ENCODE measurements at regions of chr15 and their contacts with region 1.

Region 1: DNA sequence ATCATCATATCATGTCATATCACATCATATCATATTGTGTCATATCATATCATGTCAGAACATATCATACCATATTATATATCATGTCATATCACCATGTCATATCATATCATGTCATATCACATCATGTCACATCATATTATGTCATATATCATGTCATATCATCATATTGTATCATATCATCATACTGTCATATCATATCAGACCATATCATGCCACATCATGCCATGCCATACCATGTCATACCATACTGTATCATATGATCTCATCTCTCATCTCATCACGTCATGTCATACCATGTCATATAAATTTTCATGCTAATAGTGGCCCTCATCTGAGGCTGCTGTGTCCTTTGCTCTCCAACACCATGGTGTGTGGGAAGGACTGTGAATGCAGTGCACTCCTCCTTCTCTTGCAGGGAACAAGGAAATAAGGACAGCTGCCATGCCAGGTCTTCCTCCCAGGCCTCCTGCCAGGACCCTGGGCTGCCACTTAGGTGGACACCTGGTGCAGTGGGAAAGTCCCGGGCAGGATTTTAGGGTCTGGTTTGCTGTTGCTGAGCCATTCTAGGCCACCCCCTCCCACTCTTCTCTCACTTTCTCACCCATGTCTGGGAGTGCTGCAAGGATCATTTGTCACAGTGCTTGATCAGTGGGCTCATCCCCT is 72.4 kb upstream of the TRPM1 start:
- DNase-seq: no peak
- ATAC-seq: no peak

Region 2: GRCh38 chr15:31150721-31151231 is 23.1 kb before region 1 on chr15:
- intact Hi-C with region 1: loop called (anchors 2 kb)
- DNase-seq: no peak
- ATAC-seq: no peak